ENCODE measurements at regions of chr7 and their contacts with region 1.

Region 1: DNA sequence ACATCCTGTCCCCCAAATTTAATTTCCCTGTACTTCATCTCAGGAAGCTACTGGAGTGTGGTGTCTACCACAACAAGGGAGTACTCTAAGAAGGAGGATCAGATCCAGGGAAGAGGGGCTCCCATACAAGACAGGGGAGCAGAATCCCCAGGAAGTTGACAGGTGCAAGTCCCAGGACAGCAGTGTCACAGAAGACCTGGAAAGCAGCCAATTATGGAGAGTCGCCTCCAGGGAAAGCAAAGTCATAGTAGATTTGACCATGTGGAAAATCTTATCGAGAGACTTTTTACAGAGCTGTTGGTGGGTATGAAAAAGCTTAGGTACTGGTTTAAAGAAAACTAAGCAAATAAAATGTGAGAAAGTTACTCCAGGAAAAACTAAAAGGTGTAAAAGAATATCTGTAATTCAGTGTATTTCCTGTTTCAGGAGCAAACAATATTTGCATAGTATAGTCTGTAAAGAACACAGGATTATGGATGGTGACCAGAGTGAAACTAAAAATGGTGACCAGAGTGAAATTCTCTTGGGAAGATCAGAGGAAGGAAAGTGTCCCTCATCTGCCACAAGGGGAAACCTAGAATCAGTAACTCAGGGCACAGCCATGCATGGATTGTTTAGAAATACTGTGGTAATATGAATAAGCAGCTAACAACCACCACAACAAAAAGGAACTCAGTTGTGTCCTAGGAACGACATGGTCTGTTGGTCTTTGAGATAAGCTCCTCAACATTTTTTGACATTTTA is 44.5 kb downstream of the LANCL2 start:
- DNase-seq: no peak
- H3K4me3 ChIP-seq: no peak overlapping the region
- H3K27me3 ChIP-seq: no peaks in the 10 kb centered on the region
- CTCF ChIP-seq: peak; percentile 20; the same call in 1 of the 2 replicates

Region 2: GRCh38 chr7:55053651-55054571 is 355.7 kb before region 1 on chr7:
- CTCF ChIA-PET with region 1: no interaction called
- POLR2A ChIA-PET with region 1: no interaction called
- DNase-seq: no peak
- H3K4me3 ChIP-seq: no peak overlapping the region
- H3K27me3 ChIP-seq: no peaks in the 10 kb centered on the region
- CTCF ChIP-seq: peak; percentile 20; the same call in 1 of the 2 replicates

Region 3: DNA sequence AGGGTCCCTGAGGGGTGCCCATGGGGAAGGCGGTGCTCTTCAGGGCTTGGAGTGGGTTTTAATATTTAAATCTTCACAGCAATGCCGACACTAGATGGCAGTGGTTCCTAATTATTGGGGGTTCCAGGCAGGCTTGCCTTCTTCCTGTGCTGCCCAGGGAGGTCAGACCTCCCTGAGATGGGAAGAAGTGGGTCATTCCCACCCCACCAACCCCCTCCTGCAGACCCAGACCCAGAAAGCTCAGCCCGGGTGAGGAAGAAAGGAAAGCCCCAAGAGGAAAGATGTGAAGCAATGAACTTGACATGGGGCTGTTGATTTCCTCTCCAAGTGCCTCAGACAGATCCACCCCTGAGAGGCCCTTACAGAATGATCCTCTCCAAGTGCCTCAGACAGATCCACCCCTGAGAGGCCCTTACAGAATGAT is 129.6 kb before region 1 on chr7:
- CTCF ChIA-PET with region 1: interaction called, 28 read pairs
- POLR2A ChIA-PET with region 1: no interaction called
- DNase-seq: peak; percentile 5
- H3K4me3 ChIP-seq: no peak overlapping the region
- H3K27me3 ChIP-seq: peaks cover 6% of the 10 kb centered on the region
- CTCF ChIP-seq: peak; percentile 66

Region 4: GRCh38 chr7:55457801-55458200 is 48.1 kb after region 1 on chr7:
- CTCF ChIA-PET with region 1: no interaction called
- POLR2A ChIA-PET with region 1: no interaction called
- DNase-seq: no peak
- H3K4me3 ChIP-seq: no peak overlapping the region
- H3K27me3 ChIP-seq: no peaks in the 10 kb centered on the region
- CTCF ChIP-seq: no peak